ENCODE measurements at regions of chr7 and their contacts with region 1.

Region 1: DNA sequence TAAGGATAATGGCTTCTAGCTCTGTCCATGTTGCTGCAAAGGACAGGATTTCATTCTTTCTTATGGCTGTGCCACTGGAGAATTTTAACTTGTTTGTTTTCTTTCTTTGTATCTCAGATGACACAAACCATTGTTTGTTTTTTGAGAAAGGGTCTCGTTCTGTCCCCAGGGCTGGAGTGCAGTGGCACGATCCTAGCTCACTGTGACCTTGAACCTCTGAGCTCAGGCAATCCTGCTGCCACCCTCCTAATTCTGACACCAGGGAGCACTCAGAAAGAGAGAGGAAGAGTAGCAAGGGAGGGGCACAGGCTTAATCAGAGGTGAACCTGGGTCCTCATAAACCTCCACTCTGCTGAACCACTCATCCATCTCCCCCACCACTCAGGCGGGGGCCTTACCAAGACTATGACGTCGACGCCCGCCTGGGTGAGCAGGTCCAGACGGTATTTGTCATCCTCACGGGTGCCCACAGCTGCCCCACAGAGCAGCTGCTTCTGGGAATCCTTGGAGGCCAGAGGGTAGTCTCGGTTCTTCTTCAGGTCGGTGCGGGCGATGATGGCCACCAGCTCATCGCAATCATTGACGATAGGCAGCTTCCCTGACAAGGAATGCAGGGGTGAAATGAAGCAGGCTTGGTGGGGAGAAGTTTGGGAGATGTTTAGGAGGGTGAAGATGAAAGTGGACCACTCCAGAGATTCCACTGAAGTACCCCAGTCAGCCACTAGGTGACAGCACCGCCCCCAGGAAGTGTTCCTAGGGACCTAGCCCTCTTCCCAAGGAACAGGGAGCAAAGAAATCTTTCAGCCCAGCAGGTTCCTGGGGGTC is 11.6 kb downstream of the IMPDH1 start:
- DNase-seq: no peak
- ATAC-seq: peak; percentile 89
- H3K4me3 ChIP-seq: no peak overlapping the region
- H3K27ac ChIP-seq: no peak overlapping the region
- H3K4me1 ChIP-seq: no peaks in the 10 kb centered on the region
- H3K27me3 ChIP-seq: no peaks in the 10 kb centered on the region
- CTCF ChIP-seq: peak; percentile 88 to 96 (median 95)
- POLR2A ChIP-seq: no peak
- RAD21 ChIP-seq: peak; percentile 86

Region 2: GRCh38 chr7:128381161-128381821 is 16.9 kb before region 1 on chr7:
- CTCF ChIA-PET with region 1: no interaction called
- POLR2A ChIA-PET with region 1: no interaction called
- RAD21 ChIA-PET with region 1: no interaction called
- intact Hi-C with region 1: no loop called
- DNase-seq: peak; percentile 33
- ATAC-seq: peak; percentile 89
- H3K4me3 ChIP-seq: no peak overlapping the region
- H3K27ac ChIP-seq: no peak overlapping the region
- H3K4me1 ChIP-seq: peaks cover 0 to 7% of the 10 kb centered on the region in 2 experiments; a peak in 1 of 4 replicates
- H3K27me3 ChIP-seq: no peaks in the 10 kb centered on the region
- CTCF ChIP-seq: peak; percentile 53 to 94 (median 94); a peak in 5 of 6 replicates
- POLR2A ChIP-seq: no peak
- RAD21 ChIP-seq: peak; percentile 24; the same call in 1 of the 2 replicates

Region 3: DNA sequence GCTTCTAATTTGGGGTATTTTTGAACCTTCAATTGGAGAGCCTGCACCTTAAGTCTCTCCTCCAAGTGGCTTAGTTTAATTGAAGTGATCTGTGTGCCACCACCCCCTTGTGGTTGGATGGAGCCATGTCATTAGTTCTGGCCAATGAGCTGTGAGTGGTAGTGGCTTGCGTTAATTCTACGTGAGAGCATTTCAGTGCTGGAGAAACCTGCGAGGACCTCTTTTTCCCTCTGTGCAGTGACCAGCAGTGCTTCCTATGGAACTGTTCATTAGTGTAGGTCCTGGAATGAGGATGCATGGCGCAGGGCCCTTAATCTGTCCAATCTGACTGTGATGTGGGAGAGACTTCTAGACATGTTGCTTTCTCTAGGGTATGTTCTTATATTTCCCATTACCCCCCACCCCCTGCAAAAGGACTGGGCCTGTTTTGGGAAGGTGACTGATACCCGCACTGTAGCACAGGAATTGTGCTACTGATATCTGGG is 61.2 kb after region 1 on chr7:
- CTCF ChIA-PET with region 1: interaction called, 7 read pairs
- POLR2A ChIA-PET with region 1: no interaction called
- RAD21 ChIA-PET with region 1: no interaction called
- intact Hi-C with region 1: loop called (anchors 1 kb)
- DNase-seq: peak; percentile 59
- ATAC-seq: peak; percentile 58
- H3K4me3 ChIP-seq: no peak overlapping the region
- H3K27ac ChIP-seq: no peak overlapping the region
- H3K4me1 ChIP-seq: peaks cover 10 to 35% of the 10 kb centered on the region in 2 experiments
- H3K27me3 ChIP-seq: no peaks in the 10 kb centered on the region
- CTCF ChIP-seq: peak; percentile 59 to 81 (median 76); a peak in 5 of 6 replicates
- POLR2A ChIP-seq: no peak
- RAD21 ChIP-seq: peak; percentile 56

Measured in HCT116 (cell line).